Calu3 (cell line): ENCODE measurements at regions of chr2 and their contacts with region 1.

Region 1: GRCh38 chr2:202265467-202266277 is at the start of gene NOP58:
- DNase-seq: peak; percentile 92
- H3K4me3 Mint-ChIP-seq: peak within 1 kb of the TSS; percentile 58
- H3K27ac Mint-ChIP-seq: no peak within 1 kb of the TSS
- H3K4me1 Mint-ChIP-seq: no peaks in the 10 kb centered on the region
- H3K27me3 Mint-ChIP-seq: no peaks in the 10 kb centered on the region
- CTCF ChIP-seq: no peak
- total RNA-seq, gene NOP58: 159 and 161 TPM in 2 replicates

Region 2: GRCh38 chr2:202009019-202009481 is 256.6 kb before region 1 on chr2:
- CTCF ChIA-PET with region 1: no interaction called
- intact Hi-C with region 1: no loop called
- DNase-seq: no peak
- H3K4me3 Mint-ChIP-seq: no peak overlapping the region
- H3K27ac Mint-ChIP-seq: no peak overlapping the region
- H3K4me1 Mint-ChIP-seq: no peaks in the 10 kb centered on the region
- H3K27me3 Mint-ChIP-seq: peaks cover 31% of the 10 kb centered on the region
- CTCF ChIP-seq: no peak

Region 3: DNA sequence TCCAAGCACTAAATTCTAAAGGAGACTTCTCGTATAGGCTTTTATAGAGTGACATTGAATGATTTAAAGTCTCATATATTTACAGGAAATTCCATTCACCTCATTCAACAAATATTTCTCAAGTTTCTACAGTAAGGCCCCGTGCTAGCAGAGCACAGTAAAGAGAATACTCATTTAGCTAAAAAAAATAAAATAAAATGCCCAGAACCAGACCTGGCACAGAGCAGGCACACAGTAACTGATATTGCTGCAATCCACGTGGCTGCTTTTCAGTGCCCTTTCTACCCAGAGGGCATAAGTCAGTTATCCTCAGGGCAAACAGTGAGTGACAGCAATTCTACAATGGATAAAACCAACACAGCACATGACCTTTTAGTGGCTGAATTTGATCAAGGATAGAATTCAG is 79.9 kb before region 1 on chr2:
- CTCF ChIA-PET with region 1: no interaction called
- intact Hi-C with region 1: loop called (anchors 5 kb)
- DNase-seq: peak; percentile 24
- H3K4me3 Mint-ChIP-seq: no peak overlapping the region
- H3K27ac Mint-ChIP-seq: peak overlapping the region; percentile 54
- H3K4me1 Mint-ChIP-seq: peaks cover 38% of the 10 kb centered on the region
- H3K27me3 Mint-ChIP-seq: no peaks in the 10 kb centered on the region
- CTCF ChIP-seq: no peak